T-cell (primary cell): ENCODE measurements at regions of chr12 and their contacts with region 1.

Region 1: DNA sequence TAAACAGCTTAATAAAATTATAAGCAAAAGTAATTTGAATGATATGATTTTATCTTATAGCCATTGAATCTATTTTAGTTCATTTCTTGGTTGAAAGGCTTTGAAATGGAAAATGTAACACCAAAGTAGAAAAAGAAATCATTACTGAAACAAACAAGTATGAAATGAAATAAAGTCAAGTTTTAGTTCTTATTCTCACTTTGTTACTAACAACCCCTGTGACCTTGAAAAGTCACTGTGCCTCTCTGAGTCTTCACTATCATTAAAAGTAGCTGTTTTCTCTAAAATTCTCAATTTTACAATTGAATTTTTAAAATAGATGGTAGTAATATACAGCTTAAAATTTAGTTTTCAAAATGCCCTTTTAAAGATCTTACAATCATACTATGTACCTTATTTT is 32.4 kb upstream of the SLC17A8 start:
- DNase-seq: no peak
- ATAC-seq: no peak
- H3K4me3 ChIP-seq: no peak overlapping the region
- H3K4me3 Mint-ChIP-seq: no peak overlapping the region
- H3K27ac ChIP-seq: no peak overlapping the region
- H3K27ac Mint-ChIP-seq: no peak overlapping the region
- H3K4me1 ChIP-seq: no peaks in the 10 kb centered on the region
- H3K4me1 Mint-ChIP-seq: no peaks in the 10 kb centered on the region
- H3K27me3 ChIP-seq: no peaks in the 10 kb centered on the region
- H3K27me3 Mint-ChIP-seq: no peaks in the 10 kb centered on the region

Region 2: GRCh38 chr12:100251917-100252316 is 72.6 kb before region 1 on chr12:
- CTCF ChIA-PET with region 1: no interaction called
- POLR2A ChIA-PET with region 1: interaction called in 1 of 2 experiments, 10 read pairs
- DNase-seq: no peak
- ATAC-seq: no peak
- H3K4me3 ChIP-seq: no peak overlapping the region
- H3K4me3 Mint-ChIP-seq: no peak overlapping the region
- H3K27ac ChIP-seq: no peak overlapping the region
- H3K27ac Mint-ChIP-seq: no peak overlapping the region
- H3K4me1 ChIP-seq: no peaks in the 10 kb centered on the region
- H3K4me1 Mint-ChIP-seq: no peaks in the 10 kb centered on the region
- H3K27me3 ChIP-seq: no peaks in the 10 kb centered on the region
- H3K27me3 Mint-ChIP-seq: no peaks in the 10 kb centered on the region

Region 3: GRCh38 chr12:100274291-100274690 is 50.2 kb before region 1 on chr12:
- CTCF ChIA-PET with region 1: no interaction called
- POLR2A ChIA-PET with region 1: interaction called in 1 of 2 experiments, 10 read pairs
- DNase-seq: no peak
- ATAC-seq: no peak
- H3K4me3 ChIP-seq: no peak overlapping the region
- H3K4me3 Mint-ChIP-seq: no peak overlapping the region
- H3K27ac ChIP-seq: no peak overlapping the region
- H3K27ac Mint-ChIP-seq: no peak overlapping the region
- H3K4me1 ChIP-seq: peaks cover 2 to 8% of the 10 kb centered on the region in 2 experiments
- H3K4me1 Mint-ChIP-seq: peaks cover 65 to 73% (median 70%) of the 10 kb centered on the region in 3 donors
- H3K27me3 ChIP-seq: no peaks in the 10 kb centered on the region
- H3K27me3 Mint-ChIP-seq: no peaks in the 10 kb centered on the region

Region 4: DNA sequence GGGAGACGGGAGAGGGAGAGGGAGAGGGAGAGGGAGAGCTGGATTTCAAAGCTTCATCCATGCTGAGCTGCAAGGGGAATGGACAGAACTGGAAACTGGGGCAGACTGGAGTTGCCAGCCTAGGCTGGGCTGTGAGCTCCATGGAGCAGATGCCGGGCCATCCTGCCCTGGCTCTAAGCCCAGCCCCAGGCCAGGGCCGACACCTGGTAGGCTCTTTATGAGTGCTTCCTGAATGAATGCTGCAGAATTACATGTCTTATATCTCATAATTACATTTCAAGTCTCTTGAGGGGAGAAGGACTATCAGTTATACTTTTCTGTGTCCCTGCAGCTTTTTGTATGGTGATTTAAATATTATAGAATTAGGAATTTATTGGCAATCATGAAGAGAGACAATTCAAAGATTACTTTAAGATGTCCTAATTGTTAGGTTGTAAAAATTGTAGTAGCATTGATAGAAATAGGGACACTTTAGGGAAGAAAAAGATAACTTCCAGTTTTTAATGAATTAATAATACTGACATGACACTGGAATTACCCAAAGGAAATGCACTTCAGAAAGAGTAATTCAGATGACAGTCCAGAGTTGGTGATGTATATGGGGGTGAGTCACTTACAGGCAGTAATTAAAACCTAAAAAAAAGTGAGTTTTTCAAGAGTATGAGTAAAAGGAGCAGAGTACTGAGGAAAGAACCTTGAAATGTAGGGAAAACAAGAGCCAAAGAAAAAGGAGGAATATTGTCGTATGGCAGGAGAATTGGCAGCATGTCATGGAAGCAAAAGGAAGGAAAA is 28.5 kb before region 1 on chr12:
- CTCF ChIA-PET with region 1: no interaction called
- POLR2A ChIA-PET with region 1: no interaction called
- DNase-seq: no peak
- ATAC-seq: no peak
- H3K4me3 ChIP-seq: no peak overlapping the region
- H3K4me3 Mint-ChIP-seq: no peak overlapping the region
- H3K27ac ChIP-seq: no peak overlapping the region
- H3K27ac Mint-ChIP-seq: no peak overlapping the region
- H3K4me1 ChIP-seq: no peaks in the 10 kb centered on the region
- H3K4me1 Mint-ChIP-seq: no peaks in the 10 kb centered on the region
- H3K27me3 ChIP-seq: no peaks in the 10 kb centered on the region
- H3K27me3 Mint-ChIP-seq: no peaks in the 10 kb centered on the region